Caco-2 (cell line): ENCODE measurements at regions of chr17 and their contacts with region 1.

Region 1: DNA sequence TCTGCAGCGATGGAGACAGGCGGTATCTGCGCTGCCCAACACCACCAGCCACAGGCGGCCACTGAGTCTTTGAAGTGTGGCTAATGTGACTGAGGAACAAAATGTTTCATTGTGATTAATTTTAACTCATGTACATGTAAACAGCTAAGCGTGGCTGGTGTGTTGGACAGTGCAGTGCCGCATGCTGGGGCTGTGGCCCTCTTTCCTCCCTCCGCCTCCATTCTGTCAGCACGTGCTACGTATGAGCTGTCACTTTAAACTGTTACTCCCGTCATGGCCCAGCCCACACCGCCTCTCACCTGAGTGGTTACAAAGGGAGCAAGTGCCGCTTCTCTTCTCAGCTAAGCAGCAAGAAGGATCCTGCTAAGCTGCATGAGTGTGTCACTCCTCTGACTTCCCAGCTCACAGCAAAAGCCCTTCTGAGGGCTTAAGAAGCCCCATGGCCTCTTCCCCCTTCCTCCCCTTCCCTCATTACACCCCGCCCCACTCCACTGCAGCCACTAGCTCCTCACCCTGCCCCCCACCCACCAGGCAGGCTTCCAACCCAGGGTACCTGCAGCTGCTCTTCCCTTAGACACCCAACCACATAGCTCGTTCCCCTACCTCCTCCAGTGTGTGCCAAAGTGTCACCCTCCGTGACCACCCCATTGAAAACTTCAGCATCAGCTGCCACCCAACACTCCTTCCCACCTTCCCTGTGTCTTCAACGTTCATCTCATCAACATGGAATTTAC is 15.0 kb downstream of the HASPIN start:
- DNase-seq: peak in 1 of 2 experiments; percentile 21
- H3K4me3 ChIP-seq: no peak overlapping the region
- H3K4me3 Mint-ChIP-seq: peak overlapping the region; percentile 51
- H3K27ac Mint-ChIP-seq: no peak overlapping the region
- H3K4me1 ChIP-seq: no peaks in the 10 kb centered on the region
- H3K4me1 Mint-ChIP-seq: no peaks in the 10 kb centered on the region
- H3K27me3 ChIP-seq: no peaks in the 10 kb centered on the region
- H3K27me3 Mint-ChIP-seq: no peaks in the 10 kb centered on the region
- CTCF ChIP-seq: no peak

Region 2: GRCh38 chr17:3622977-3623594 is 115.6 kb before region 1 on chr17:
- CTCF ChIA-PET with region 1: no interaction called
- POLR2A ChIA-PET with region 1: no interaction called
- intact Hi-C with region 1: no loop called
- DNase-seq: no peak
- H3K4me3 ChIP-seq: no peak overlapping the region
- H3K4me3 Mint-ChIP-seq: no peak overlapping the region
- H3K27ac Mint-ChIP-seq: no peak overlapping the region
- H3K4me1 ChIP-seq: no peaks in the 10 kb centered on the region
- H3K4me1 Mint-ChIP-seq: no peaks in the 10 kb centered on the region
- H3K27me3 ChIP-seq: no peaks in the 10 kb centered on the region
- H3K27me3 Mint-ChIP-seq: no peaks in the 10 kb centered on the region
- CTCF ChIP-seq: no peak

Region 3: DNA sequence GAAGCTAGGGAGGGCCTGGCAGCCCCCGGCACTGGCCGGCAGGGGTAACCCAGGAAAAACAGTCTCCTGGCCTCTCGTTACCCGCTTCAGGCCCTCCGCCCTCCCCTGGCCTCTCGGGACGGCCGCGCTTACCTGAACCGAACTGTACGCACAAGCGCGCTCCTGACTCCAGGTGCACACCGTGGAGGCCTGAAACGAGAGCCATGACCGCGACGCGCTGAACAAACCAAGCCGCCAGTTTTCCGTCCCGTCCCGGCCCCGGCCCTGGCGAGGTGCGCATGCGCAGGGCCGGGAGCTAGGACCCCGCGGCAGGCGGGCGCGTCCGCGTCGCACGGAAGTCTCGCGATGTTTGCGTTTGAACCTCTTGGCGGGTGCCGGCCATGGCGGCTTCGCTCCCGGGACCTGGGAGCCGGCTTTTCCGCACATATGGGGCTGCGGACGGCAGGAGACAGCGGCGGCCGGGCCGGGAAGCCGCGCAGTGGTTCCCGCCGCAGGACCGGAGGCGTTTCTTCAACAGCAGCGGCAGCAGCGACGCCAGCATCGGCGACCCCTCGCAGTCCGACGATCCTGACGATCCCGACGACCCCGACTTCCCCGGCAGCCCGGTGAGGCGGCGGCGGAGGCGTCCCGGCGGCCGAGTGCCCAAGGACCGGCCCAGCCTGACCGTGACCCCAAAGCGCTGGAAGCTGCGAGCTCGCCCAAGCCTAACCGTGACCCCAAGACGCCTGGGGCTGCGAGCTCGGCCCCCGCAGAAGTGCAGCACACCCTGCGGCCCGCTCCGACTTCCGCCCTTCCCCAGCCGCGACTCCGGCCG is 15.0 kb before region 1 on chr17 and contains the start of gene HASPIN:
- CTCF ChIA-PET with region 1: interaction called, 11 read pairs
- POLR2A ChIA-PET with region 1: no interaction called
- intact Hi-C with region 1: no loop called
- DNase-seq: peak; percentile 85 to 86
- H3K4me3 ChIP-seq: peak within 1 kb of the TSS; percentile 76
- H3K4me3 Mint-ChIP-seq: peak within 1 kb of the TSS; percentile 77
- H3K27ac Mint-ChIP-seq: peak within 1 kb of the TSS; percentile 75
- H3K4me1 ChIP-seq: no peaks in the 10 kb centered on the region
- H3K4me1 Mint-ChIP-seq: peaks cover 16% of the 10 kb centered on the region
- H3K27me3 ChIP-seq: no peaks in the 10 kb centered on the region
- H3K27me3 Mint-ChIP-seq: no peaks in the 10 kb centered on the region
- CTCF ChIP-seq: peak in 1 of 2 experiments; percentile 11
- total RNA-seq, gene HASPIN: 9.1 and 9.5 TPM in 2 replicates

Region 4: GRCh38 chr17:3808701-3809100 is 70.0 kb after region 1 on chr17:
- CTCF ChIA-PET with region 1: interaction called, 4 read pairs
- POLR2A ChIA-PET with region 1: no interaction called
- intact Hi-C with region 1: loop called (anchors 5 kb)
- DNase-seq: no peak
- H3K4me3 ChIP-seq: no peak overlapping the region
- H3K4me3 Mint-ChIP-seq: no peak overlapping the region
- H3K27ac Mint-ChIP-seq: no peak overlapping the region
- H3K4me1 ChIP-seq: no peaks in the 10 kb centered on the region
- H3K4me1 Mint-ChIP-seq: peaks cover 6% of the 10 kb centered on the region
- H3K27me3 ChIP-seq: no peaks in the 10 kb centered on the region
- H3K27me3 Mint-ChIP-seq: no peaks in the 10 kb centered on the region
- CTCF ChIP-seq: no peak

Region 5: DNA sequence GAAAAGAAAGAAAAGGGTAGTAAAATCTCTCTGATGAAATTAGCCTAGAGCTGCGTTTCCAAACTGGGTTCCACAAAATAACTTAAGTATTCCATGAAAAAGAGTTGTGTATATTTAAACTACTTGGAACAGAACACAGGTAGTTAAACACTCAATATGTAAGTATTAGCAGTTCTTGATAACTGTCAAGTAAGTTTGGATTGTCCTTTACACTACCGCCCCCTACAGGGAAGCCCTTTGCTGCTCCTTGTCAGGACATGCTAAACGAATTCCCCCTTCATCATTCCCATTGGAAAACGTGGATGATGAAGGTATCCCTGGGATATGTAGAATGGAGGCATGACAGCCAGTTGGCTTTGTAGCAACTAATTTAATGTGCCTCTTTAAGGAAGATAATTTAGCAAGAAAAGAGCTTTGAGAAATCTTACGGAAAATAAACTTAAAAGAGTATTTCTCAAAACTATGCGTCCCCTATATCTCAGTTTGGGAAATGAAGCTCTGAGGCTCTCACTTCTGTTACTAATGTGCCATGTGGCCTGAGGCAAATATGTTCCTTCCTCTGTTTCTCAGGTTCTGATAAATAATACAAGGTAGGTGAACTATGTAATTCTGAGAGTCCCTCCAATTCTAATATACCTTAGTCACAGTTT is 88.5 kb after region 1 on chr17:
- CTCF ChIA-PET with region 1: interaction called, 3 read pairs
- POLR2A ChIA-PET with region 1: no interaction called
- intact Hi-C with region 1: loop called (anchors 1 kb)
- DNase-seq: peak; percentile 41 to 53
- H3K4me3 ChIP-seq: no peak overlapping the region
- H3K4me3 Mint-ChIP-seq: no peak overlapping the region
- H3K27ac Mint-ChIP-seq: no peak overlapping the region
- H3K4me1 ChIP-seq: no peaks in the 10 kb centered on the region
- H3K4me1 Mint-ChIP-seq: no peaks in the 10 kb centered on the region
- H3K27me3 ChIP-seq: no peaks in the 10 kb centered on the region
- H3K27me3 Mint-ChIP-seq: no peaks in the 10 kb centered on the region
- CTCF ChIP-seq: peak; percentile 15 to 40

Region 6: DNA sequence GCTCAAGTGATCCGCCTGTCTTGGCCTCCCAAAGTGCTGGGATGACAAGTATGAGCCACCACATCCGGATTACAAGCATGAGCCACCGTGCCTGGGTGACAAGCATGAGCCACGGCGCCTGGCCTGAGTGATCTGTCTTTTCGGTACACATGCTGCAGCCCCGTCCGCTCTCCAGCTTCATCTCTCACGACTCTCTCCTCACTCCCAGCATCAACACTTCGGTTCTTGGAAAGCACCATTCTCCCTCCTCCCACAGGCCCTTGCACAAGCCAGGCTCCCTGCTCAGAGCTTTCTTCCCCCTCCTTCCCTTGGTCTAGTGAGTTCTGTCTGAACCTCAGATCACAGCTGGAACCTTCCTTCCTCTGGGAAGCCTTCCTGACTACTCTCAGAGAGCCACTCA is 113.8 kb after region 1 on chr17:
- CTCF ChIA-PET with region 1: no interaction called
- POLR2A ChIA-PET with region 1: no interaction called
- intact Hi-C with region 1: no loop called
- DNase-seq: no peak
- H3K4me3 ChIP-seq: no peak overlapping the region
- H3K4me3 Mint-ChIP-seq: no peak overlapping the region
- H3K27ac Mint-ChIP-seq: no peak overlapping the region
- H3K4me1 ChIP-seq: no peaks in the 10 kb centered on the region
- H3K4me1 Mint-ChIP-seq: no peaks in the 10 kb centered on the region
- H3K27me3 ChIP-seq: no peaks in the 10 kb centered on the region
- H3K27me3 Mint-ChIP-seq: no peaks in the 10 kb centered on the region
- CTCF ChIP-seq: no peak

Region 7: GRCh38 chr17:4004517-4005295 is 266.0 kb after region 1 on chr17:
- CTCF ChIA-PET with region 1: no interaction called
- POLR2A ChIA-PET with region 1: no interaction called
- intact Hi-C with region 1: loop called (anchors 5 kb)
- DNase-seq: peak; percentile 79 to 83
- H3K4me3 ChIP-seq: no peak overlapping the region; the same call in 1 of the 2 replicates
- H3K4me3 Mint-ChIP-seq: peak overlapping the region; percentile 68
- H3K27ac Mint-ChIP-seq: peak overlapping the region; percentile 95
- H3K4me1 ChIP-seq: peaks cover 12% of the 10 kb centered on the region
- H3K4me1 Mint-ChIP-seq: no peaks in the 10 kb centered on the region
- H3K27me3 ChIP-seq: no peaks in the 10 kb centered on the region
- H3K27me3 Mint-ChIP-seq: no peaks in the 10 kb centered on the region
- CTCF ChIP-seq: peak; percentile 56 to 76